ENCODE measurements at regions of chr6 and their contacts with region 1.

Region 1: GRCh38 chr6:18595774-18596530 is 208.8 kb downstream of the RNF144B start:
- DNase-seq: peak; percentile 85
- ATAC-seq: peak; percentile 86
- H3K4me3 ChIP-seq: no peak overlapping the region
- H3K27ac ChIP-seq: no peak overlapping the region
- H3K4me1 ChIP-seq: no peaks in the 10 kb centered on the region
- H3K27me3 ChIP-seq: peaks cover 35% of the 10 kb centered on the region
- CTCF ChIP-seq: peak; percentile 96

Region 2: GRCh38 chr6:18680842-18681241 is 84.9 kb after region 1 on chr6:
- CTCF ChIA-PET with region 1: no interaction called
- POLR2A ChIA-PET with region 1: no interaction called
- intact Hi-C with region 1: loop called (anchors 1 kb)
- DNase-seq: peak; percentile 12
- ATAC-seq: peak; percentile 31; the same call in 1 of the 2 replicates
- H3K4me3 ChIP-seq: no peak overlapping the region
- H3K27ac ChIP-seq: no peak overlapping the region
- H3K4me1 ChIP-seq: no peaks in the 10 kb centered on the region
- H3K27me3 ChIP-seq: peaks cover 31% of the 10 kb centered on the region
- CTCF ChIP-seq: peak; percentile 47

Region 3: GRCh38 chr6:18752278-18753068 is 156.5 kb after region 1 on chr6:
- CTCF ChIA-PET with region 1: no interaction called
- POLR2A ChIA-PET with region 1: no interaction called
- intact Hi-C with region 1: loop called (anchors 5 kb)
- DNase-seq: no peak
- ATAC-seq: no peak
- H3K4me3 ChIP-seq: no peak overlapping the region
- H3K27ac ChIP-seq: no peak overlapping the region
- H3K4me1 ChIP-seq: no peaks in the 10 kb centered on the region
- H3K27me3 ChIP-seq: peaks cover 49% of the 10 kb centered on the region
- CTCF ChIP-seq: no peak